Activated B cell treated with CpG ODN at 0.5 μM for 24 hours (primary cell): ENCODE measurements at regions of chr1 and their contacts with region 1.

Region 1: GRCh38 chr1:34786521-34787325 is 5.7 kb downstream of the GJB3 start:
- DNase-seq: no peak
- ATAC-seq: peak; percentile 82
- H3K4me3 Mint-ChIP-seq: no peak overlapping the region
- H3K27ac Mint-ChIP-seq: no peak overlapping the region
- H3K4me1 Mint-ChIP-seq: peaks cover 7% of the 10 kb centered on the region
- H3K27me3 Mint-ChIP-seq: peaks cover 52% of the 10 kb centered on the region
- CTCF ChIP-seq: no peak

Region 2: DNA sequence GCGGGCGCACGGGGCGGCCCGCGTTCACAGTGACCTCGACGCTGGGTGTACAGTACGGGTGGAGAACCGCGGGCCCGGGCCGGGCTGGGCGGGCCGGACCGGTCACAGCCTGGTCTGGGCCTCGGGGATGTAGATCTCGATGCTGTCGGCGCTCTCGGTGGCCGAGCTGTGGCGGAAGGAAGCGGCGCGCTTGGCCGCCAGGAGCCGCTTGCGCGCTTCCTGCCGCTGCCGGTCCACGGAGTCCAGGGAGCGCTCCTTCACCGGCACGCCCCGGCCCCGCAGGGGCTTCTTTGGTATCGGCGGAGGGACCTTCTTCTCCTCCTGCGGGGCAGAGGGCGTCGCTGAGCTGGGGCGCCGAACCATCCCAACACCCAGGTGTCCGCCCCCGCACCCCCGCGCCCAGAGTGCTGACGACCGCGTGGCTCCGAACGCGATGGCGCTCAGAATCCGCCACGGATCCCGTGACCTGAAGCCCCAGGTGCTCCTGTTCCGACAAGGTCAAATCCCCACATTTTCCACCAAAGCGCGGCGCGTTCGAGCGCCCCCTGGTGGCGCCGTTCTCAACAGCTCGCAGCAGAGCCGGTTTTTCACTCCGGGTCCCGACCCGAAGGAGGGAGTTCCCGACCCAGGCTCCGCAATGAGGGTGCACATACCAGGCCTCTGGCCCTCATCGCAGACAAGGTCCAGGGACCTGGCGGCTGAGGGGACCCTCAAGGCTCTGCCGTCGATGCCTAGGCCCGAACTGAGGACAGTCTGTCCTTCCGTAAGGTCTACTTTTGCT is 79.4 kb after region 1 on chr1:
- CTCF ChIA-PET with region 1: interaction called, 8 read pairs
- POLR2A ChIA-PET with region 1: no interaction called
- intact Hi-C with region 1: loop called (anchors 1 kb)
- DNase-seq: peak; percentile 95
- ATAC-seq: peak; percentile 80
- H3K4me3 Mint-ChIP-seq: peak overlapping the region; percentile 90
- H3K27ac Mint-ChIP-seq: peak overlapping the region; percentile 88
- H3K4me1 Mint-ChIP-seq: peaks cover 17% of the 10 kb centered on the region
- H3K27me3 Mint-ChIP-seq: no peaks in the 10 kb centered on the region
- CTCF ChIP-seq: peak; percentile 93

Region 3: GRCh38 chr1:35305383-35305782 is 518.7 kb after region 1 on chr1:
- CTCF ChIA-PET with region 1: no interaction called
- POLR2A ChIA-PET with region 1: no interaction called
- intact Hi-C with region 1: no loop called
- DNase-seq: no peak
- ATAC-seq: no peak
- H3K4me3 Mint-ChIP-seq: no peak overlapping the region
- H3K27ac Mint-ChIP-seq: no peak overlapping the region
- H3K4me1 Mint-ChIP-seq: peaks cover 3% of the 10 kb centered on the region
- H3K27me3 Mint-ChIP-seq: no peaks in the 10 kb centered on the region
- CTCF ChIP-seq: no peak